Activated B cell treated with CpG ODN at 0.5 μM for 24 hours (primary cell): ENCODE measurements at regions of chr16 and their contacts with region 1.

Region 1: GRCh38 chr16:667780-668518 is at the start of gene RHOT2:
- DNase-seq: peak; percentile 96
- ATAC-seq: peak; percentile 98
- H3K4me3 Mint-ChIP-seq: peak within 1 kb of the TSS; percentile 80
- H3K27ac Mint-ChIP-seq: peak within 1 kb of the TSS; percentile 80
- H3K4me1 Mint-ChIP-seq: peaks cover 12% of the 10 kb centered on the region
- H3K27me3 Mint-ChIP-seq: no peaks in the 10 kb centered on the region
- CTCF ChIP-seq: peak; percentile 7
- total RNA-seq, gene RHOT2: 141 and 170 TPM in 2 replicates

Region 2: GRCh38 chr16:600781-601180 is 67.2 kb before region 1 on chr16:
- CTCF ChIA-PET with region 1: no interaction called
- POLR2A ChIA-PET with region 1: no interaction called
- intact Hi-C with region 1: no loop called
- DNase-seq: no peak
- ATAC-seq: no peak
- H3K4me3 Mint-ChIP-seq: no peak overlapping the region
- H3K27ac Mint-ChIP-seq: no peak overlapping the region
- H3K4me1 Mint-ChIP-seq: no peaks in the 10 kb centered on the region
- H3K27me3 Mint-ChIP-seq: no peaks in the 10 kb centered on the region
- CTCF ChIP-seq: no peak

Region 3: DNA sequence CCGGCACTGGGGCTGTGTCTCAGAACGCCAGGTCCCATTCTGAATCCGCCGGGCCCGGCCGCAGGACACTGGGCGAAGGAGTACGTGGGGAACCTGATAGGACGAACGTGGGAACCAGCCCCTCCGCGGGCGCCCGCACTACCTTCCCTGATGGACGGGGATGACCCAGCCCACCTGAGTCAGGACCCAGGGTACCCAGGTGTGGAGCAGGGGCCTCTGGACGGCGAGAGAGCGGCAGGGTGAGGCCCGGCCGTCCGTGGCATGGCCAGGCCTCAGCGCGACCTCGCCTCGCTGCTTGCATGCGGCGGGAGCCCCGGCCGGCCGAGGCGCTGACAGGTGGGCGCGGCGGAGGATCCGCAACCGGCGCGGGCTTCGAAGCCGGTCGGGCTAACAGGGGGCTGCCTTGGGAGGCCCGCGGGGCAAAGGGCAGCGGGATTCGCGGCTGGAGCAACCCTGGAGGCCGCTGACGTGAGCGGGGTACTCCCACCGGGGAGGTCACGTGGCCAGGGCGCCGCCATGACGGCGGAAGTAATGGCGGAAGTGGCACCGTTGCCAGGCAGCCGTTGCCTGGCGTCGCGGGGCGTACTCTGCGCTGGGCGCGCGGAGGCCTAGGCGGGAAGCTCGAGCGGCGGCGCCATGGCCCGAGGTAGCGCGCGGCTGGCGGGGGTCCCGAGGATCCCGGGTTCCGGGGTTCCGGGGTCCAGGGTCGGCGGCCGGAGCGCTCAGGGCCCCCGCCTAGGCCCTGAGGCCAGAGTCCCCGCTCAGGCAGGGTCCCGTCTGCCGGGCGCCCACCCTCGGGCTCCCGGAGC is 19.0 kb before region 1 on chr16 and contains the start of gene WDR90:
- CTCF ChIA-PET with region 1: no interaction called
- POLR2A ChIA-PET with region 1: no interaction called
- intact Hi-C with region 1: loop called (anchors 2 kb)
- DNase-seq: peak; percentile 93
- ATAC-seq: peak; percentile 85
- H3K4me3 Mint-ChIP-seq: peak within 1 kb of the TSS; percentile 84
- H3K27ac Mint-ChIP-seq: peak within 1 kb of the TSS; percentile 85
- H3K4me1 Mint-ChIP-seq: peaks cover 22% of the 10 kb centered on the region
- H3K27me3 Mint-ChIP-seq: no peaks in the 10 kb centered on the region
- CTCF ChIP-seq: no peak
- total RNA-seq, gene WDR90: 24.8 and 33.7 TPM in 2 replicates